ENCODE measurements at regions of chr11 and their contacts with region 1.

Region 1: DNA sequence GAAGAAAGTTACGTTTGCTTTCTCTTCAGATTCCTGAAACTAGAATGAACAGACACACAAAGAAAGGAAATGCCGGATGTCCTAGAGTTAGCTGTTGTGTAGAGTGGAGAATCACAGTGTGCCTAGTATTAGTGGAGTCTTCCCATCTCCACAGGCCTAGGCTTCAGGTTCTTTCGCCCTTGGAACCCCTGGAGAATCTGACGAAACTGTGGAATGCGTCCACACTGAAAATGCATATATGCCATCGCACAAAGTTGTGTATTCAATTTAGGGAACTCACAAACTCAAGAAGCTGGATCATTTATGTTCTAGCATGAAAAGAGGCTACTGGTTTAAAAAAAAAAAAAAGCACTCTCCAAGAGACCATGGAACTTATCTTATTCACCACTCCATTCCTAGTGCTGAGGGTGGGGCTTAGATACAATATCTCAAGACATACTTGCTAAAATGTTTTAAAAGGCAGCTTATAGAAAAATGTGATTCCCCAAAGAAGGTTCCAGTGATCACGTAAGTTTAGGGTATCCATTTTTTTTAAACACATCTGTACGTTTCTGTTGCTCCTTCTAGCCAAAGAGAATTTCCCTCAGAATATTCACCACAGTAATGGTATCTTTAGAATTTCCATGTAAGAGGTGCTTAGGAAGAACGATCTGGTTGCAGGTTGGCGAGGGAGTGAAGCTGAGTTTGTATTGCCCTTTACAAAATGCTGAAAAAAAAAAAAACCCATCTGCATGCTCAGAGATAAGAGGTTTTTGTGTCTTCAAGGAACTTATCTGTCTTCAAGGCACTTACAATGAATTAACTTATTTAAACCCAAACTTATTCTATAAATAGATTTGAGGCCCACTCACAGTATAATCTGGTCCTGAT is 20.0 kb downstream of the MAML2 start:
- DNase-seq: no peak
- H3K4me3 ChIP-seq: no peak overlapping the region
- CTCF ChIP-seq: no peak

Region 2: DNA sequence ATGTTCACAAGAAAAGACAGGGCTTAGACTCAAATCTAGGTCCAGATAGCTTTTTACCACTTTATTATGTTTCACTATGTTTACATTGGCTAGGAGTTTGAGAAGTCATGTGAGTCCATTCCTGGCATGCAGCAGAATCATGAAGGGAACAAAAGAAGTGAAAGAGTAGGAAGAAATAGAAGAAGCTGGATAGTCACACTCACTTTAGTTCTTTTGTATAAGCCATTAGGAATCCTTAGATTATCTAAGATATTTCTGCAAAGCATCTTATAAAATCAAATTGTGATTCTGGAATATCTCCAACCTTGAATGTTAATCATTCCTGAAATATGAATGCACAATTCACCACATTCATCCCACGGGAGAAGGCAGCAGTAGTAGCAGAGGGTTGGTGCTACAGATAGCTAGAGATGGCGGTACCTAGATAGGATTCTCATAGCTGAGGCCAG is 11.9 kb before region 1 on chr11:
- CTCF ChIA-PET with region 1: interaction called, 10 read pairs
- POLR2A ChIA-PET with region 1: no interaction called
- DNase-seq: peak; percentile 53
- H3K4me3 ChIP-seq: no peak overlapping the region
- CTCF ChIP-seq: no peak